A549 (cell line): ENCODE measurements at regions of chr2 and their contacts with region 1.

Region 1: DNA sequence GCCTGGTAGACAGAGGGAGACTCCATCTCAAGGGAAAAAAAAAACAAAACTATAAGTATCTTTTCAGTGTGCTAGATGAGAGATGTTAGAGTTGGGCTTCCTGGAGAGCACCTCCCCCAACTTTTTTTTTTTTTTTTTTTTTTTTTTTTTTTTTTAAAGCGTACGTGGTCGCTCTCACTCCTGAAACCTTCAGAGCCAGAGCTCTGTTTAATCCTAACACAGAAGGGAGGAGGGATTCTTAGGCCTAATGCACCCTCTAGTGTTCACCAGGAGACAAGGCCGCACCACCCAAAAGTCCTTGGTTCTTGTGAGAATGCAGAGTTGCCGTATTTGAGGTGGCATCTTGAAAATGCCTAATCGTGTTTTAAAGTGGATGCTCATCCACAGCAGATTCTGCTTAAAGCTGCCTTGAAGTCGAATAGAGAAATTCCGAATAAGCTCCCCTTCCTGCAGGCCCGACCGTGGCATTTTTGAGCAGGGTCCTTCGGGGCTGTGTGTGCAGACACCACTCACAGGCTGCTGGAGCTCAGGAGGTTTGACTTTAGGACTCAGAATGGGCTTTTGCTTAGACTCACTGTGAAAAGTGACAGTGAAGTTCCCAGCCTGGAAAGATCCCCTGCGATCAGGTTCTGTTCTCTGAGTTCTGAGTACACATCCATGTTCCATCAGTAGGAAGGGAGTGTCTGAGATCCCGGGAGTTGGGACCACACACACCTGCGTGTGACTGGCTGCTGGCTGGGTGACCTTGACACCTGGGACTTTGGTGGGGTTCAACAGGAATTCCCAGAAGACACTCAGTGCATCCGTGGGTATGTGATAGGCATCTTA is 252.6 kb downstream of the AGAP1 start:
- DNase-seq: peak; percentile 76 to 90
- ATAC-seq: peak; percentile 96 to 99
- H3K4me3 ChIP-seq: no peak overlapping the region
- H3K27ac ChIP-seq: no peak overlapping the region
- H3K4me1 ChIP-seq: no peaks in the 10 kb centered on the region; the same call in 2 of the 3 replicates
- CTCF ChIP-seq: peak; percentile 80
- EP300 ChIP-seq: no peak
- POLR2A ChIP-seq: no peak
- RAD21 ChIP-seq: peak; percentile 86

Region 2: GRCh38 chr2:235577404-235578330 is 168.8 kb before region 1 on chr2:
- CTCF ChIA-PET with region 1: interaction called, 13 read pairs
- POLR2A ChIA-PET with region 1: no interaction called
- DNase-seq: no peak
- ATAC-seq: no peak
- H3K4me3 ChIP-seq: no peak overlapping the region
- H3K27ac ChIP-seq: no peak overlapping the region
- H3K4me1 ChIP-seq: no peaks in the 10 kb centered on the region
- CTCF ChIP-seq: no peak
- EP300 ChIP-seq: no peak
- POLR2A ChIP-seq: no peak
- RAD21 ChIP-seq: no peak

Region 3: GRCh38 chr2:235605312-235606003 is 141.0 kb before region 1 on chr2:
- CTCF ChIA-PET with region 1: interaction called, 19 read pairs
- POLR2A ChIA-PET with region 1: no interaction called
- DNase-seq: peak in 1 of 2 experiments; percentile 34
- ATAC-seq: peak in 1 of 2 experiments; percentile 62; a peak in 2 of 6 replicates
- H3K4me3 ChIP-seq: no peak overlapping the region
- H3K27ac ChIP-seq: no peak overlapping the region
- H3K4me1 ChIP-seq: no peaks in the 10 kb centered on the region
- CTCF ChIP-seq: no peak
- EP300 ChIP-seq: no peak
- POLR2A ChIP-seq: no peak
- RAD21 ChIP-seq: no peak

Region 4: DNA sequence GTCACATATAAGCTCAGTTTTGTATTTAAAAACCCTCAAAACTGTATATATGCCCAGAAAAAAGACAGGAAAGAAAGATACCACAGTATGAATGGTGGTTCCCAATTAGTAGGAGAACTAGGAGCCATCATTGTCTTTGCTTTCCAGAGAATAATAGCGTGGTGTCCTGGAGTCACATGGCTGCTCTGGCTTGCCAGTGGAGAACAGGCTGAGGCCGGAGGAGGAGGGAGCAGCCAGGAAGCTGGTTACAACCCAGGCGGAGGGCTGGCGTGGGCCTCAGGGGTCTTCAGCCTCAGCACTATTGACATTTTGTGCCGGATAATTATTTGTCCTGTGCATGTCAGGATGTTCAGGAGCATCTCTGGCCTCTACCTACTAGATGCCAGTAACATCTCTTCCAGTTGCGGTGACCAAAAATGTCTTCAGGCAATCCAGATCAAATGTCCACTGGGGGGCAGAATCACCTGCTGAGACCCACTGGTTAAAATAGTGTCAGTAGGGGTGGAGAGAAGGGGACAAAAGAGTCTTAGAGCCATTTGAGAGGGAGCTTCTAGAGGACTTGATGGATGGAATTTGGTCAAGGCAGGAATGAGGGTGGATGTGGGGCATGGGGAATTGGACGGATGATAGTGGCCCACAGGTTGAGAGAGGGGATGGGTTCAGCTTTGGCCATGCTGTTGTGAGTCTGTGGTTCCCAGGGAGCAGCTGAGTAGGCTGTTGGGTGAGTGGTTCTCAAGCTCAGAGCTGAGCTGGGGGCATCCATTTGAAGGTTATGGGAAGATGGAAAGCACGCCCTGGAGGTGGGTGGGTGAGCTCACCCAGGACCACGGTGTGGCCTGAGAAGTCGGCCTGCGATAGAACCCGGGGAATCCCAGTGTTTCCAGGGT is 107.7 kb before region 1 on chr2:
- CTCF ChIA-PET with region 1: interaction called, 11 read pairs
- POLR2A ChIA-PET with region 1: no interaction called
- DNase-seq: no peak
- ATAC-seq: peak in 1 of 2 experiments; percentile 36; a peak in 3 of 6 replicates
- H3K4me3 ChIP-seq: no peak overlapping the region
- H3K27ac ChIP-seq: no peak overlapping the region
- H3K4me1 ChIP-seq: peaks cover 7% of the 10 kb centered on the region; the same call in 1 of the 3 replicates
- CTCF ChIP-seq: peak; percentile 18; the same call in 1 of the 3 replicates
- EP300 ChIP-seq: no peak
- POLR2A ChIP-seq: no peak
- RAD21 ChIP-seq: no peak

Region 5: DNA sequence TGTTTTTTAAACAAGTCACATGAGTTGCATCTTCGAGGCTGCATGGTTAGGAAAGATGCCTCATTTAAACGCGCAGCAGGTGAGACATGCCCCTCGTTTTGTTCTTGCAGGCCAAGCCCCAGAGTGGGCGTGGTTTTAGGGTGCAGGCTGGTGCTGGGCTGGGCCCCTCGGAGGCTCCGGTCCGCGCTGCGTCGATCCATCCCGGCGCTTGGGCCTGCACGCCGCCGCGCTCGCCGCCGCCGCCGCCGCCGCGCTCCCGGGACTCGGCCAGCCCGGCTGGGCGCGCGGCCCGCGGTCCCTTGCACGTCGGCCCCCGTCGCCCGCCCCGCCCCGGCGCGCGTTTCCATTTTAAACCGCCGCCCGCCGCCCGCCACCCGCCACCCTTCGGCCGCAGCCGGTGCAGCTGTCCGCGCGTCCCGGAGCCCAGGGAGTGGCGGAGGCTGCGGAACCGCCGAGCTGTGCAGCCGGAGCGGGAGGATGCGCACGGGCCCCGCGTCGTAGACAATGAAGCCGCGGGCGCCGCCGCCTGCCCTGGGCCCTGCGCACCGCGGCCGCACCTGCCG is 77.1 kb before region 1 on chr2:
- CTCF ChIA-PET with region 1: interaction called, 15 read pairs
- POLR2A ChIA-PET with region 1: no interaction called
- DNase-seq: peak; percentile 41 to 82
- ATAC-seq: peak; percentile 72 to 76
- H3K4me3 ChIP-seq: peak overlapping the region; percentile 83
- H3K27ac ChIP-seq: peak overlapping the region; percentile 59 to 87
- H3K4me1 ChIP-seq: peaks cover 18% of the 10 kb centered on the region
- CTCF ChIP-seq: no peak
- EP300 ChIP-seq: no peak
- POLR2A ChIP-seq: no peak
- RAD21 ChIP-seq: no peak

Region 6: DNA sequence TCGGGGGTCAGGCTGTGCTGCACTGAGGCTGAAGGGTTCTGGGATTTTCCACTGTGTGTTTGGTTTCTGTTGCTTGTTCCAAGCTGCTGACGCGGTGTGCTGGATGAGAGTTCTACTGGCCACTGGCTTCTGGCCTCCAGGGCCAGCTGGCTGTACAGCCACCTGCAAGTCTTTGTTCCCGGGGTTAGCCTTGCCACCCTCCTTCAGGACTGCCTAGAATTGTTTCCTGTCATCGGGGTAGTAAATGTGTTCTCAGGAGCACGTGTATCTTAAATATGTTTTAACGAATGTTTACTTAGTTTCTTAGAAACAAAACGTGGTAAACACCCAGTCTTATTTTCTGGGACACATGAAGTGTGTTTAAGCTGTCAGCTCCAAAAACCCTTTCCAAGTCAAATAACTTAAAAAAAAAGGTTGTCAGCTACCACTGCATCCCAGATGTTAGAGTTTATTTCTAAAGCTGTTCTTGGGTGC is 21.4 kb before region 1 on chr2:
- CTCF ChIA-PET with region 1: interaction called, 14 read pairs
- POLR2A ChIA-PET with region 1: no interaction called
- DNase-seq: no peak
- ATAC-seq: no peak
- H3K4me3 ChIP-seq: no peak overlapping the region
- H3K27ac ChIP-seq: no peak overlapping the region
- H3K4me1 ChIP-seq: peaks cover 14% of the 10 kb centered on the region
- CTCF ChIP-seq: no peak
- EP300 ChIP-seq: no peak
- POLR2A ChIP-seq: no peak
- RAD21 ChIP-seq: no peak